ENCODE measurements at regions of chrX and their contacts with region 1.

Region 1: GRCh38 chrX:131068945-131069719 is 11.0 kb downstream of the ARHGAP36 start:
- DNase-seq: peak; percentile 82
- H3K4me3 ChIP-seq: peak overlapping the region in 1 of 2 experiments; percentile 29; a peak in 1 of 4 replicates
- H3K27ac ChIP-seq: no peak overlapping the region; a peak in 1 of 4 replicates
- H3K4me1 ChIP-seq: no peaks in the 10 kb centered on the region; a peak in 1 of 4 replicates
- H3K27me3 ChIP-seq: peaks cover 15% of the 10 kb centered on the region; the same call in 1 of the 2 replicates
- CTCF ChIP-seq: peak; percentile 62
- EP300 ChIP-seq: no peak
- RAD21 ChIP-seq: peak; percentile 54

Region 2: GRCh38 chrX:130857207-130857606 is 211.9 kb before region 1 on chrX:
- CTCF ChIA-PET with region 1: no interaction called
- POLR2A ChIA-PET with region 1: no interaction called
- DNase-seq: no peak
- H3K4me3 ChIP-seq: no peak overlapping the region
- H3K27ac ChIP-seq: no peak overlapping the region
- H3K4me1 ChIP-seq: no peaks in the 10 kb centered on the region
- H3K27me3 ChIP-seq: no peaks in the 10 kb centered on the region
- CTCF ChIP-seq: no peak
- EP300 ChIP-seq: no peak
- RAD21 ChIP-seq: no peak

Region 3: GRCh38 chrX:131082325-131082740 is 13.2 kb after region 1 on chrX:
- CTCF ChIA-PET with region 1: interaction called, 17 read pairs
- POLR2A ChIA-PET with region 1: no interaction called
- DNase-seq: no peak
- H3K4me3 ChIP-seq: peak overlapping the region in 1 of 2 experiments; percentile 44; a peak in 2 of 4 replicates
- H3K27ac ChIP-seq: peak overlapping the region in 1 of 2 experiments; percentile 65; a peak in 1 of 4 replicates
- H3K4me1 ChIP-seq: peaks cover 0 to 2% of the 10 kb centered on the region in 2 experiments; a peak in 1 of 4 replicates
- H3K27me3 ChIP-seq: peaks cover 21% of the 10 kb centered on the region
- CTCF ChIP-seq: no peak
- EP300 ChIP-seq: no peak
- RAD21 ChIP-seq: no peak

Measured in SK-N-SH (cell line).